WTC11 (cell line): ENCODE measurements at regions of chr21 and their contacts with region 1.

Region 1: DNA sequence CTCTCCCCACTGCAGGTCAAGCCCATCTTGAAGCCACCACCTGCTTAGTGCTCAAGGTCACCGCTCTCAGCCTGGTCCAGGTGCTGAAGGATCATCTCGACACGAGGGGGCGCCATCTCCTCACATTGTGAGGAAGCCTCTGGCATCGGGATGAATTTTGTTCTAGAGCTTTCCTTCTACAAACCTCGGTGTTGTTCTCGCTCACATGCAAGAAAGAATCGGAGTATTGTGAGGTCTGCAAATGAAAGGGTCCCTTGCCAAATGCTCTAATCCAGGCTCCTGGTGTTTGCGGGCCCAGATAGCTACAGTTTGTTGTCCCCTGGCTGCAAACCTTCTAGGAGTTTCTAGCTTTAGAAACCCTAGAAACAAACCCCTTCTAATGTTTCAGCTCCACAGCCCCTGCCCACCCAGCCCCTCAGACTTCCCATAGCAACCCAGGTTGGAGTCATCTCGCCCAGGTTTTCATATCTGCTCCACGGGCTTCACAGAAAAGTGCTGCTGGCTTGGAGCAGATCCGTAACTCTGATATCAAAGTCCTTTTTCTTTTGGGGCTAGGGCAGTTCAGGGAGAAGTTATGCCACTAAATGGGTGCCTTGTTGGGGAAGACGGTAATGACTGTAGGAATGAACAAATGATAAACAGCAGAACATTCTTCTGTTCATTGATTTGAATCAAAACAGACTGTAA is 8.6 kb upstream of the ATP5PO start:
- DNase-seq: peak; percentile 94
- ATAC-seq: peak; percentile 97
- H3K4me3 Mint-ChIP-seq: no peak overlapping the region
- H3K27ac Mint-ChIP-seq: no peak overlapping the region
- H3K4me1 Mint-ChIP-seq: peaks cover 6% of the 10 kb centered on the region
- H3K27me3 Mint-ChIP-seq: peaks cover 10% of the 10 kb centered on the region
- CTCF ChIP-seq: peak; percentile 84

Region 2: DNA sequence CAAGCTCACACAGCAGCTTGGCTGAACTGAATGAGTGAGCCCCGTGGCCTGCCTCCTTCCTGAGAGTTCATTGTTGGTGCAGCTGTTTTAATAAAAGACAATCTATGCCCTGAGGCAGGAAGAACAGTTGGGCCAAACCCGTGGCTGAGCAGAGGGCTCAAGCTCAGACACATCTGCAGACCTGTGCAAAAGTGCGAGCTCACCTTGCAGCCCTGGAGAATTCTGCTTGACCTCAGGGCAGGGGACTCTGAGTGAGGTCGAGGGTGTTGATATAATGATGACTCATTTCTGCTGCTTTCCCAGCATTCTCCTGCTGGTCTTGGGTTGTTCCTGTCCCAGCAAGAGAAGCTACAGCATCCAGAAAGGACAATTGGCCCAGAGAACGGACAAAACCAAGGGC is 69.6 kb before region 1 on chr21:
- CTCF ChIA-PET with region 1: no interaction called
- POLR2A ChIA-PET with region 1: no interaction called
- DNase-seq: no peak
- ATAC-seq: no peak
- H3K4me3 Mint-ChIP-seq: no peak overlapping the region
- H3K27ac Mint-ChIP-seq: no peak overlapping the region
- H3K4me1 Mint-ChIP-seq: peaks cover 19% of the 10 kb centered on the region
- H3K27me3 Mint-ChIP-seq: no peaks in the 10 kb centered on the region
- CTCF ChIP-seq: no peak

Region 3: GRCh38 chr21:33947451-33948095 is 23.4 kb after region 1 on chr21:
- CTCF ChIA-PET with region 1: interaction called, 12 read pairs
- POLR2A ChIA-PET with region 1: no interaction called
- DNase-seq: peak; percentile 62
- ATAC-seq: peak; percentile 91
- H3K4me3 Mint-ChIP-seq: peak overlapping the region; percentile 55
- H3K27ac Mint-ChIP-seq: peak overlapping the region; percentile 99
- H3K4me1 Mint-ChIP-seq: peaks cover 37% of the 10 kb centered on the region
- H3K27me3 Mint-ChIP-seq: no peaks in the 10 kb centered on the region
- CTCF ChIP-seq: no peak

Region 4: DNA sequence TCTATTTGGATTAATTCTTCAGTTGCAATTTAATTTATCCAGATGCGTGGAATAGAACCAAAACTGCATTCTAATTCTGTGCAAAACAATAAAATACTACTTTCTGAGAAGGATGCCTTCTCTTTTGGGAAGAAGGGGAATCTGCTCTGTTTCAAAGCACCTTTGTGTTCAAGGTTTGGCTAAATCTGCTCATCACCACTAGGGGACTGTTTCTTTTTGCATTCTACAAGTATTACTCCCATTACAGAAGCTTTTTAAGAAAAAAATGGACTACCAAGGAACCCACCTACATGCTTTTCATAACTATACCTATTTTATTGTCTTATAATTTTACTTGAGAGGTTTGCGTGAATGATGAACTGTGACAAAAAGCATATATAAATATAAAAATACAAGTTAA is 167.4 kb after region 1 on chr21:
- CTCF ChIA-PET with region 1: interaction called, 16 read pairs
- POLR2A ChIA-PET with region 1: no interaction called
- DNase-seq: no peak
- ATAC-seq: no peak
- H3K4me3 Mint-ChIP-seq: no peak overlapping the region
- H3K27ac Mint-ChIP-seq: no peak overlapping the region
- H3K4me1 Mint-ChIP-seq: peaks cover 24% of the 10 kb centered on the region
- H3K27me3 Mint-ChIP-seq: no peaks in the 10 kb centered on the region
- CTCF ChIP-seq: no peak

Region 5: GRCh38 chr21:34202553-34203372 is 278.5 kb after region 1 on chr21:
- CTCF ChIA-PET with region 1: interaction called, 20 read pairs
- POLR2A ChIA-PET with region 1: no interaction called
- DNase-seq: peak; percentile 63
- ATAC-seq: peak; percentile 58
- H3K4me3 Mint-ChIP-seq: peak overlapping the region; percentile 76
- H3K27ac Mint-ChIP-seq: peak overlapping the region; percentile 96
- H3K4me1 Mint-ChIP-seq: peaks cover 73% of the 10 kb centered on the region
- H3K27me3 Mint-ChIP-seq: no peaks in the 10 kb centered on the region; the same call in 1 of the 2 replicates
- CTCF ChIP-seq: no peak